Activated CD8-positive, alpha-beta T cell treated with anti-CD3 and anti-CD28 coated beads for 36 hours (primary cell): ENCODE measurements at regions of chr1 and their contacts with region 1.

Region 1: GRCh38 chr1:55140546-55140983 is 74.6 kb downstream of the USP24 start:
- DNase-seq: peak; percentile 85
- ATAC-seq: peak; percentile 98
- H3K4me3 Mint-ChIP-seq: no peak overlapping the region
- H3K27ac Mint-ChIP-seq: peak overlapping the region; percentile 43
- H3K4me1 Mint-ChIP-seq: peaks cover 10% of the 10 kb centered on the region
- H3K27me3 Mint-ChIP-seq: no peaks in the 10 kb centered on the region
- CTCF ChIP-seq: peak; percentile 77

Region 2: DNA sequence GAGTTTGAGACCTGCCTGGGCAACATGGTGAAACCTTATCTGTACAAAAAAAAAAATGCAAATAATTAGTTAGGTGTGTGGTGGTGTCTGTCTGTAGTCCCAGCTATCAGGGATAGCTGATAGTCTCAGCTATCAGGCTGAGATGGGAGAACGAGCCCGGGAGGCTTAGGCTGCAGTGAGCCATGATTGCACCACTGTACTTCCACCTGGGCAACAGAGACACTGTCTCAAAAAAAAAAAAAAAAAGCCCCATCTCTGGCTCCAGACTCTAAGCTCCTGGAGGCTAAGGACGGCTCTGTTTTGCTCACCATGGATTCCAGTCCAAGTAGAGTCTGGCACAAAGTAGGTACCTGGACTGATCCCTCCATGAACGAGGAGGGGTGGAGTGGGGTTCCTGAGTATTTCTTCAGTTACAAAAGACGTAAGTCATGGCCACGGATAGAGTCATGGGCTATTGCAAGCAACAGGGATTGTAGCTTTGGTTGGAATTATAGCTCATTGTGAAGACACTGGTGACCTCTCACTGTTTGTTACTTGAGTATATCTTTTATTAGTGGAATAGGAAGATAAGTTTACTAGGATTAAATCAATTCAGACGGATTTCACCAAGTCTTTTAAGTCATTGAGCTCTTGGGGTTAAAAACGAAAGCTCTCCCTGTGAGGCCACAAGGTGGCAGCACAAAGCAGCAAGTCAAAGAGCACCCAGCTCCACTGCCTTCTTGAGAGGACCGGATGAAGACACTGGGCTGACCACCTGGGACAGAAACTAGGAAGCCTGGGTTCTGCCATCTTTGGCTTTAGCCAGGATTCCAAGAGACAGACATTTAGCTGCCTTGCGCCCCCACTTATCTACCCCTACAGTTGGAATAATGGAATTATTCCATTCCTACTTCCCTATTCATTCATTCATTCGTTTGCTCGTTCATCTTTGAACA is 195.7 kb before region 1 on chr1:
- CTCF ChIA-PET with region 1: no interaction called
- POLR2A ChIA-PET with region 1: no interaction called
- intact Hi-C with region 1: no loop called
- DNase-seq: peak; percentile 85
- ATAC-seq: peak; percentile 86
- H3K4me3 Mint-ChIP-seq: no peak overlapping the region
- H3K27ac Mint-ChIP-seq: no peak overlapping the region
- H3K4me1 Mint-ChIP-seq: peaks cover 6% of the 10 kb centered on the region
- H3K27me3 Mint-ChIP-seq: no peaks in the 10 kb centered on the region
- CTCF ChIP-seq: peak; percentile 67

Region 3: DNA sequence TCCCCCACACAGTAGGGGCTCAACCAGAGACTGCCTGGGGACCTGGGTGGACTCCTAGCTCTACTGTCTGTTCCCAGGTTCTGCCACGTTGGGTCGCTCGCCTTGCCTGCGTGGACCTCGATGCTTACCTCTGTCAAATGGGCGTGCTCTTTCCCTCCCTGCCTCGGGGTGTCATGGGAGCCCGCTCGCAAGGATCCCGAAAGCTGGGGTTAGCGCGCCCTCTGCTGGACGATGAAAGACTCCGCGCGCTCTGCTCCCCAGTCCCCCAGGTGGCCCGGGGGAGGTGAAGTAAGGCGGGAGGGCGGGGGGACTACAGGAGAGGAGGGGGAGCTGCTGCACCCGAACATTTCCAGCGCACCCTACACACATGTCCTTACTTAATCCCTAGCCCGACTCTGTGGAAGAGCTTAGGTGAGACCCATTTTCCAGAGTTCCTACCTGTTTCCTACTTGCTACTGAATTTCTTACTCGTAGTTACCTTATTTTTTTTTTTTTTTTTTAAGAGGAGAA is 144.2 kb before region 1 on chr1:
- CTCF ChIA-PET with region 1: no interaction called
- POLR2A ChIA-PET with region 1: no interaction called
- intact Hi-C with region 1: no loop called
- DNase-seq: peak; percentile 85
- ATAC-seq: peak; percentile 91
- H3K4me3 Mint-ChIP-seq: no peak overlapping the region
- H3K27ac Mint-ChIP-seq: no peak overlapping the region
- H3K4me1 Mint-ChIP-seq: peaks cover 24% of the 10 kb centered on the region
- H3K27me3 Mint-ChIP-seq: peaks cover 42% of the 10 kb centered on the region
- CTCF ChIP-seq: peak; percentile 88

Region 4: DNA sequence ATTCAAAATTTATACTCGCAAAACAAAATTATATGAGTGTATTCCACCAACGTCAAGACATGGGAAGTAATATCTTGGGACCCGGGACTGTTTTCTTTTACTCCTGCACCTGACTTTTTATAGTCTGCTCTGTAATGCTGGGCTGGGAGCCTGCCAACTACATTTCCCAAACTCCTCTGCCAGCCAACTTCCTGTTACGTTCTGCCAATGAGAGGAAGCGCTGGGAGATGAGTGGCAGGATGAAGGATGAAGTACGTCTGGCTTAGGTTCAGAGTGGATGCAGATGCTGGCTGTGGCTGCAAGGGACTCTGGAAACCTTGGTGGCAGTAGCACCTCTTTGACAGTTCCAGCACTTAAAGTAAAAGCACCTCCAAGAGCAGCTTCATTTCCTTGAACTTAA is 14.9 kb after region 1 on chr1:
- CTCF ChIA-PET with region 1: interaction called, 18 read pairs
- POLR2A ChIA-PET with region 1: interaction called, 5 read pairs
- intact Hi-C with region 1: no loop called
- DNase-seq: peak; percentile 13
- ATAC-seq: no peak
- H3K4me3 Mint-ChIP-seq: no peak overlapping the region
- H3K27ac Mint-ChIP-seq: no peak overlapping the region
- H3K4me1 Mint-ChIP-seq: peaks cover 39% of the 10 kb centered on the region
- H3K27me3 Mint-ChIP-seq: no peaks in the 10 kb centered on the region
- CTCF ChIP-seq: no peak

Region 5: DNA sequence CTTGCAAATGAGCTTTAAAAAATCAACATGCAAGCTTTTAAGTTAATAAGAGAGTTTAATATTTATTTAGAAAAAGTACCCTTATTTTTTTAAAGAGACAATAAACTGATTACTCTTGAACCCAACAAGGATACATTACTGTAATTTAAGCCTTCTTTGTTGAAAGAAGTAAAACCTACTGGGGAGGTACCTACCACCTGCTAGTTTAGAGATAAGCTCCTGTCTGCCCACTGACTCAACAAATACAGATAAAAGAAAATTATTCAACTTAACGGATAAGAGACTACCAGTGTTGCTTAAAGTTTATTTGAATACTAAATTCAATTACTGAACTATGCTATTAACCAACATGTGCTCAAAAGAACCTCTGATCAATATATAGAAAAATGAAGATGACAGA is 51.5 kb after region 1 on chr1:
- CTCF ChIA-PET with region 1: no interaction called
- POLR2A ChIA-PET with region 1: no interaction called
- intact Hi-C with region 1: no loop called
- DNase-seq: no peak
- ATAC-seq: no peak
- H3K4me3 Mint-ChIP-seq: no peak overlapping the region
- H3K27ac Mint-ChIP-seq: no peak overlapping the region
- H3K4me1 Mint-ChIP-seq: peaks cover 72% of the 10 kb centered on the region
- H3K27me3 Mint-ChIP-seq: no peaks in the 10 kb centered on the region
- CTCF ChIP-seq: no peak

Region 6: DNA sequence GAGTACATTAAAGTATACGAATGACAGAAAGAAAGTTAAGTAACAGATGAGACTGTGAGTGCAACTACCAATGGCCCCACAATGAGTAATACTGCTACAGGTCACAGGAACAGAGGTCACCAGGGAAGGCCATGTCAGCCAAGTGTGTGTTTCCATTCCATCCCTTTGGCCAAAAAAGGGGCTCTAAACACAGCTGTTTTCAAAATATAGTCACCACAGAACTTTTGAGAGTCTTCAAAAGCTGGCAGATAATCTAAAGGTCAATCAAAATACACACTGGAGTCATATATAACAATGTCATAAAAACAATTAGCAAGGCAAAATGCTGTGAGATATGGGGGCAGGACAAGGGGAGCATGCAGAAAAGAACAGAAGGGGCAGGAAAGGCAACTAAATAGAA is 64.4 kb after region 1 on chr1:
- CTCF ChIA-PET with region 1: interaction called, 21 read pairs
- POLR2A ChIA-PET with region 1: no interaction called
- intact Hi-C with region 1: loop called (anchors 5 kb)
- DNase-seq: peak; percentile 56
- ATAC-seq: peak; percentile 77
- H3K4me3 Mint-ChIP-seq: peak overlapping the region; percentile 30
- H3K27ac Mint-ChIP-seq: peak overlapping the region; percentile 76
- H3K4me1 Mint-ChIP-seq: peaks cover 69% of the 10 kb centered on the region
- H3K27me3 Mint-ChIP-seq: no peaks in the 10 kb centered on the region
- CTCF ChIP-seq: no peak